Activated CD4-positive, alpha-beta T cell treated with anti-CD3 and anti-CD28 coated beads for 36 hours (primary cell): ENCODE measurements at regions of chr9 and their contacts with region 1.

Region 1: GRCh38 chr9:89597711-89598625 is 6.8 kb upstream of the GADD45G start:
- DNase-seq: peak; percentile 69
- ATAC-seq: peak; percentile 52
- H3K4me3 Mint-ChIP-seq: no peak overlapping the region
- H3K27ac Mint-ChIP-seq: no peak overlapping the region
- H3K4me1 Mint-ChIP-seq: no peaks in the 10 kb centered on the region
- H3K27me3 Mint-ChIP-seq: peaks cover 6% of the 10 kb centered on the region

Region 2: GRCh38 chr9:88874383-88874782 is 723.6 kb before region 1 on chr9:
- CTCF ChIA-PET with region 1: no interaction called
- POLR2A ChIA-PET with region 1: no interaction called
- intact Hi-C with region 1: no loop called
- DNase-seq: no peak
- ATAC-seq: no peak
- H3K4me3 Mint-ChIP-seq: no peak overlapping the region
- H3K27ac Mint-ChIP-seq: no peak overlapping the region
- H3K4me1 Mint-ChIP-seq: peaks cover 4% of the 10 kb centered on the region
- H3K27me3 Mint-ChIP-seq: peaks cover 32% of the 10 kb centered on the region

Region 3: DNA sequence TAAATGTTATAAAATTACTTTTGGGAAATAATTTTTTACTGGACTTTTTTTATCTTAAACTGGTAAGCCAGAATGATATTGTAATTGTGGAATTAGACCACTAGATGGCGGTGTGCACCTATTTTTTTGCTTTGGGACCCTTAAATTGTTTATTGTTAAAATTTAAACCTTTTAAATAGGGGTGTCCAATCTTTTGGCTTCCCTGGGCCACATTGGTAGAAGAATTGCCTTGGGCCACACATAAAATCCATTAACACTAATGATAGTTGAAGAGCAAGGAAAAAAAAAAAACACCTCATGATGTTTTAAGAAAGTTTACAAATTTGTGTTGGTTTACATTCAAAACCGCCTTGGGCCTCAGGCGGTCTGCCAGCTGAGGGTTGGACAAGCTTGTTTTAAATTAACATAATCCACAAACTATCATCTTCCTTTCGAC is 21.5 kb before region 1 on chr9:
- CTCF ChIA-PET with region 1: interaction called, 17 read pairs
- POLR2A ChIA-PET with region 1: no interaction called
- intact Hi-C with region 1: no loop called
- DNase-seq: no peak
- ATAC-seq: no peak
- H3K4me3 Mint-ChIP-seq: no peak overlapping the region
- H3K27ac Mint-ChIP-seq: no peak overlapping the region
- H3K4me1 Mint-ChIP-seq: peaks cover 10% of the 10 kb centered on the region
- H3K27me3 Mint-ChIP-seq: peaks cover 27% of the 10 kb centered on the region

Region 4: GRCh38 chr9:90095682-90096081 is 497.7 kb after region 1 on chr9:
- CTCF ChIA-PET with region 1: interaction called, 114 read pairs
- POLR2A ChIA-PET with region 1: no interaction called
- intact Hi-C with region 1: no loop called
- DNase-seq: peak; percentile 39
- ATAC-seq: peak; percentile 53
- H3K4me3 Mint-ChIP-seq: no peak overlapping the region
- H3K27ac Mint-ChIP-seq: no peak overlapping the region
- H3K4me1 Mint-ChIP-seq: peaks cover 20% of the 10 kb centered on the region
- H3K27me3 Mint-ChIP-seq: peaks cover 15% of the 10 kb centered on the region

Region 5: DNA sequence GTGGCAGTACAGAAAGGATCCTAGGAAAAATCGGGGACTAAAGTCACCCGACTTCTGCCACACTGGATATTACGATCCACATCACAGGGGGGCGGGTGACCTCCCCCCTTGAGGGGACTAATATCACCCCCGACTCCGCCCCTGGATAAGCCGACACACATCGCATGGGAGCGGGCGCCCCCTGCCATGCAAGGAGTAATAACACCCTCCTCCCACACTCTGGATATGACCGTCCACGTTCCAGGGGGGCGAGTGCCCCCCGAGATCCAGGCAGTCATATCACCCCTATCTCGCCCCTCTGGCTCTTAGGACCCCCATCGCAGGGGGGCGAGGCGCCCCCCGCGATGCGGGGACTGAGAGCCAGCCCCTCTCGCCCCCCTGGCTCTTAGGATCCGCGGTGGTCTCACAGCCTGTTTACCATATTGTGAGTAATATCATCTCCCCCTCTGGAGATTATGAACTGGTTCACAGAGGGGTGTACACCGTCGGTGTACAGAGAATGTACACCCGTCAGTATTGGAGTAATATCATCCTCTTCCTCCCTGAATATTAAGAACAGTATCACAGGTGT is 621.7 kb after region 1 on chr9:
- CTCF ChIA-PET with region 1: no interaction called
- POLR2A ChIA-PET with region 1: no interaction called
- intact Hi-C with region 1: loop called in 1 of 2 experiments (anchors 2 kb)
- DNase-seq: peak; percentile 63
- ATAC-seq: peak; percentile 71
- H3K4me3 Mint-ChIP-seq: no peak overlapping the region
- H3K27ac Mint-ChIP-seq: no peak overlapping the region
- H3K4me1 Mint-ChIP-seq: peaks cover 2% of the 10 kb centered on the region
- H3K27me3 Mint-ChIP-seq: peaks cover 10% of the 10 kb centered on the region

Region 6: GRCh38 chr9:90815183-90815943 is 1217.4 kb after region 1 on chr9:
- CTCF ChIA-PET with region 1: no interaction called
- POLR2A ChIA-PET with region 1: no interaction called
- intact Hi-C with region 1: no loop called
- DNase-seq: peak; percentile 28
- ATAC-seq: peak; percentile 44
- H3K4me3 Mint-ChIP-seq: no peak overlapping the region
- H3K27ac Mint-ChIP-seq: peak overlapping the region; percentile 52
- H3K4me1 Mint-ChIP-seq: peaks cover 11% of the 10 kb centered on the region
- H3K27me3 Mint-ChIP-seq: peaks cover 6% of the 10 kb centered on the region